PC-3 (cell line): ENCODE measurements at regions of chr2 and their contacts with region 1.

Region 1: DNA sequence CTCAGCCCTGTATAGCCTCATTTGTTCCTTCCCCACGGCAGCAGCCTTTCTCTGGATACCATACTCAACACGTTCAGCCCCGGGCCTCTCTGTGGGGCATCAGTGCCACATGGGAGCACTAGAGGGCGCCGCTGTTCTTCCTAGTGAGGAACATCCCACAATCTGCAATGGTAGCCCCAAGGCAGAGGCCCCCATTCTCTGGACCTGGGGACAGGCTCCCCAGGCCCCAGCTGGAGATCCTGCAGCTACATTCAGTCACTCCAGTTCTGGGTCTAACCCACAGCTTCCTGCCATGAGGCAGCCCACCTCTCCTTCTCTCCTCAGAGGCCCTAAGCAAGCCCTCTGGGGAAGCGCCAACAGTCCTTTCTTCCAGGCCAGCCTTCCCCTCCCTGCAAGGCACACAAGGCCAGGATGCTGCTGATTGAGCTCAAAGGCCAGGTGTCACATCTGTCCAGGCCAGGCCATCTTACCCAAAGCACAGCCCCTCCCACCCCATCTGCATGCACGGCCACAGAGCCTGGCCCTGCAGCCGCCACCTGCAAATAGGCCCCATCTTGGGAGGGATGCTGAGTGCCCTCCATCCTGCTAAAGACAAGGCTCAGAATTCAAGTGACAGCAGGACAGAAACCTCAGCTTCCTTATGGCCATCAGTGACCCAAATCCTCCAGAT is 14.3 kb upstream of the SFXN5 start:
- DNase-seq: peak; percentile 80
- ATAC-seq: peak; percentile 43
- H3K4me3 ChIP-seq: no peak overlapping the region
- H3K27ac ChIP-seq: no peak overlapping the region
- H3K4me1 ChIP-seq: peaks cover 16% of the 10 kb centered on the region
- H3K27me3 ChIP-seq: no peaks in the 10 kb centered on the region
- CTCF ChIP-seq: peak; percentile 95

Region 2: DNA sequence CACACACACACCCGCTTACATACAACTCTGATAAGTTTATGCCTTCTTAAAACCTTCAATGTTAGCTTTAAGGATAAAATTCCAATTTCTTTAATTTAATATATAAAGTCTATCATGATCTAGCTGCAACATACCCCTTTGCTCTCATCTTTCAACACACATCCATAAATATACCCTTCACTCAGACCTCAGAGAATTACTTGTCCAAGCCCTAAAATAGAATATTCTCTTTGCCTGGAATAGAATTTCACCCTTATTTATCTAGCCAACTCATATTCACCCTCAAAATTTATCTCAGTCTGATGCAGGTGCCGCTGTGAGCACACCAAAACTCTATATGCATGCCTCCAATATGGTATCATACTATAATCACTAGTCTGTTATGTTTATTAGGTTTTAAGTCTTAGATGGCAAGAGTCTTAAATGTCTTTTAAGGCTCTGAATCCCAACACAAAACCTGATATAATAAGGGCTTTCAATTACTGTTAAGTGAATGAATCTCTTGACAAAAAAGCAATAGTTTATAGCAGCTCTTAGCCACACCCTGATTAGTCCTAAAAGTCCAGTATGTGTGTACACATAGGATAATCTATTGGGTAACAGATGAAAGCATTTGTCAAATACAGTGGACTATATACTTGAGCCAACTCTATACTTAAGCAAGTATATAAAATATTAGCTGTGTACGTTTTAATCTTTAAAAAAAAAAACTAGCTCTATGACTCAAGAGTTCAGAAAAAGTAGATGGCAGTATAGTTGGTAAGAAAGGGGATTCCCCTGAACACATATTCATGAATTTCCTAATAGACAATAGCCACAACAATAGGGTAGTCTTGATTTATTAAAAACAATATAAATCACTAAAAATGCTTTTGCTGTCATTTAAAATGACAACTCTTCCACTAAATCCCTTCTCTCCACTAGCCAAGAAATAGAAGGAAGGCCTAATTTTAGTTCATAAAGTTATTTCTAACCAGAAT is 404.5 kb before region 1 on chr2:
- CTCF ChIA-PET with region 1: no interaction called
- POLR2A ChIA-PET with region 1: no interaction called
- intact Hi-C with region 1: no loop called
- DNase-seq: no peak
- ATAC-seq: no peak
- H3K4me3 ChIP-seq: no peak overlapping the region
- H3K27ac ChIP-seq: no peak overlapping the region
- H3K4me1 ChIP-seq: no peaks in the 10 kb centered on the region
- H3K27me3 ChIP-seq: no peaks in the 10 kb centered on the region
- CTCF ChIP-seq: no peak

Region 3: DNA sequence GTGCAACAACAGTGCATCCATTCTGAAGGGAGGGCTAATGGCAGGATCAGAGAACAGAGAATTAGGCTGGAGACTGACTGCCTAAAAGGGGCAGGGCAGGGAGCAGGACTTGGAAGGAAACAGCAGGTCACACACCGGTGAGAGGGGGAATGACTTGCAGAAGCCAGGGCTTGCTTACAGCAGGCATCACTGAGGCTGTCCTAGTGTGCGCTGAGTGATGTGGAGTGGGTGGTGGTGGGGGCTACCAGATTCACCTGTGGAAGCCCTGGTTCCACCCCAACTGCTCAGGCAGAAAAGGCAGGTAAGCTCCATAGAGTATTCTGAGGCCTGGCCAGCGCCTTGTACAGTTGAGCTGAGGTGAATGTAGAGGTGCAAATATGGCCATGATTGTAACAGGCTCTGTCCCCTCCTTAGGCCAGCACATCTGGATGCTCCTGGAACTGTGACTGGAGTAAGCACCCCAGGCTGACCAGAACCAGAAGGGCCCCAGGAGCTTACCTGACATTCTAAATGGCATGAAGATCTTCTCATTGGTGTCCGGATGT is 63.7 kb before region 1 on chr2:
- CTCF ChIA-PET with region 1: no interaction called
- POLR2A ChIA-PET with region 1: interaction called, 17 read pairs
- intact Hi-C with region 1: no loop called
- DNase-seq: no peak
- ATAC-seq: no peak
- H3K4me3 ChIP-seq: no peak overlapping the region
- H3K27ac ChIP-seq: no peak overlapping the region
- H3K4me1 ChIP-seq: no peaks in the 10 kb centered on the region; the same call in 1 of the 2 replicates
- H3K27me3 ChIP-seq: no peaks in the 10 kb centered on the region
- CTCF ChIP-seq: no peak

Region 4: DNA sequence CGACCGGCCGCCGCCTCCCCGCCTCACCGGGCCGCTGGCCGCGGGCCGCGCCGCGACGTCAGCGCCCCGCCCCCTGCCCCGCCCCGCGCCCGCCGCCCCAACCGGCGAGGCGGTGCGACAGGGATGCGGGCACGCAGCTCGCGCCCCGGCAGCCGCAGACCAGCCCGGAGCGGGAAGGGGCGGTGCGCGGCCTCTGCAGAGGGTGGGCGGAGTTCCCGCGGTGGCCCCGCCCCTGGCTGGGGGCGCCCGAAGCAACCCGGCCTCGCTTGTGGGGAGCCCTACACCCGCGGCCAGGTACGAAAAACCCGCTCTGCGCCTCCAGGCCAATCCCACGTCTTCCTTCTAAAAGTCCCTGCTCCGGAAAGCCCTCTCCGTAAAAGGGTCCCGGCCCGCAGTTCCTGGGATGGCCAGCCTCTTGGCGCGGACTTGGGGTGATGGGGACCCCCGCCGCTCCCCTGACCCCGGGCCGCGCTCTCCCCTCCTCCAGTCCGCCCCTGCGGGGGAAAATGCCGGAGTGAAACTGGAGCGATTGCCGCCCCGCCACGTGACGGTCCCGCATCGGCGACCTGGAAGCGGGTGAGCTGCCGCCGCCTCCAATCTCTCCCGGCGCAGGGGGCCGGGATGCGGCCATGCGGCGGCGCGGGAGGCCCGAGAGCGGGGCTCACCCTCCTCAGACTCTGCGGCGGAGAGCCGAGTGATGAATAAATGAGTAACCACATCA is 27.2 kb after region 1 on chr2 and contains the start of gene RAB11FIP5:
- CTCF ChIA-PET with region 1: no interaction called
- POLR2A ChIA-PET with region 1: no interaction called
- intact Hi-C with region 1: loop called (anchors 1 kb)
- DNase-seq: peak; percentile 84
- ATAC-seq: peak; percentile 66
- H3K4me3 ChIP-seq: peak within 1 kb of the TSS; percentile 87
- H3K27ac ChIP-seq: peak within 1 kb of the TSS; percentile 82
- H3K4me1 ChIP-seq: peaks cover 18% of the 10 kb centered on the region
- H3K27me3 ChIP-seq: no peaks in the 10 kb centered on the region
- CTCF ChIP-seq: no peak
- total RNA-seq, gene RAB11FIP5: 26.6 and 36.9 TPM in 2 replicates

Region 5: DNA sequence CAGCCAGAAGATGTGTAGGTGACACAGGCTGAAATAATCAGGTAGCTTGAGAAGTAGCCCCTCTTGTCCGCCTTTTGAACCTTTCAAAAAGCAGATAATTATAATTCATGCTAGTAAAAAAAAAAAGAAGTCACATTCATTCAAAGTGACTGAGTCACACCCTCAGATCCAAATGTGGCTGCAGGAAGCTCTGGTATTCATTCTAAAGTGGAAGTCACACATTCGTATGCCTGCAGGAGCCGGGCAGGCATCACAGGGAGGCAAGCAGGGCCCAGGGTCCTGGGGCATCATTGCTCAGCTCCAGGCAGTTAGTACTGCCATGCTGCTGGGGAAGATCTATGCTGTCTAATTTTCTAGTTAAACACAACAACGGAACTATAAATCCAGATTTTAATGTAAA is 48.6 kb after region 1 on chr2:
- CTCF ChIA-PET with region 1: interaction called, 12 read pairs
- POLR2A ChIA-PET with region 1: interaction called, 3 read pairs
- intact Hi-C with region 1: no loop called
- DNase-seq: no peak
- ATAC-seq: no peak
- H3K4me3 ChIP-seq: no peak overlapping the region
- H3K27ac ChIP-seq: no peak overlapping the region
- H3K4me1 ChIP-seq: no peaks in the 10 kb centered on the region
- H3K27me3 ChIP-seq: no peaks in the 10 kb centered on the region
- CTCF ChIP-seq: no peak

Region 6: DNA sequence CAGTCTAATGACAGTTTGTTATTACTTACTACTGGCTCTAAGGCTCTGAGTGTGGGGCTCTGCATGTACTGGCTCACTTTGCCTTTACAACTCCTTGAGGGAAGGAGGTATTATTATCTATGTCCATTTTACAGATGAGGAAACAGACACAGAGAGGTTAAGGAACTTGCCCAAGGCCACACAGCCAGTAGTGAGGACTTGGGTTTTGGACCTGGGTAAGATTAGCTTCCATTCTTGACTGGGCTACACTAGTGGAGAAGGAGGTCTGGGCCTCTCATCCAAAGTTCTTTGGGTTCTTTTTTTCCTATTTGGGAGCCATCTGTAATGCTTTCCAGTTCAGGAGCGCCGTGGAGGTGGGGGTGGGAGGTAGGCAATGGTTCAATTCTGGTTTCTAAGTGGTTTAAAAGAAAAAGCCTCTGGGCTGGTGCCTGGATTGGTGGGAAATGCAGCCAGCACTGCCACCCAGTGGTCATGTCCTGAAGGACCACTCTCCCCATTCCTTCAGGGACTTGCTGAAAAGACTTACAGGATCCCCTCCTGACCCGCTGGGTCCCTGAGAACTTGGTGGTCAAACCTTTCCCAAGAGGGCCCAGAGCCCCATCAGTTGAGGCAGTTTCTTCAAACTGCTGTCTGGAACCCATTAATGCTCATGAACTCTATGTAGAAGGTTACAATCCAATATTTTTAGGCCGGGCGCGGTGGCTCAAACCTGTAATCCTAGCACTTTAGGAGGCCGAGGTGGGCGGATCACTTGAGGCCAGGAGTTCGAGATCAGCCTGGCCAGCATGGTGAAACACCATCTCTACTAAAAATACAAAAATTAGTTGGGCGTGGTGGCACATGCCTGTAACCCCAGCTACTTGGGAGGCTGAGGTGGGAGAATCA is 77.9 kb after region 1 on chr2:
- CTCF ChIA-PET with region 1: interaction called, 6 read pairs
- POLR2A ChIA-PET with region 1: no interaction called
- intact Hi-C with region 1: loop called (anchors 1 kb)
- DNase-seq: peak; percentile 81
- ATAC-seq: peak; percentile 96
- H3K4me3 ChIP-seq: no peak overlapping the region
- H3K27ac ChIP-seq: no peak overlapping the region
- H3K4me1 ChIP-seq: no peaks in the 10 kb centered on the region
- H3K27me3 ChIP-seq: no peaks in the 10 kb centered on the region
- CTCF ChIP-seq: peak; percentile 85

Region 7: DNA sequence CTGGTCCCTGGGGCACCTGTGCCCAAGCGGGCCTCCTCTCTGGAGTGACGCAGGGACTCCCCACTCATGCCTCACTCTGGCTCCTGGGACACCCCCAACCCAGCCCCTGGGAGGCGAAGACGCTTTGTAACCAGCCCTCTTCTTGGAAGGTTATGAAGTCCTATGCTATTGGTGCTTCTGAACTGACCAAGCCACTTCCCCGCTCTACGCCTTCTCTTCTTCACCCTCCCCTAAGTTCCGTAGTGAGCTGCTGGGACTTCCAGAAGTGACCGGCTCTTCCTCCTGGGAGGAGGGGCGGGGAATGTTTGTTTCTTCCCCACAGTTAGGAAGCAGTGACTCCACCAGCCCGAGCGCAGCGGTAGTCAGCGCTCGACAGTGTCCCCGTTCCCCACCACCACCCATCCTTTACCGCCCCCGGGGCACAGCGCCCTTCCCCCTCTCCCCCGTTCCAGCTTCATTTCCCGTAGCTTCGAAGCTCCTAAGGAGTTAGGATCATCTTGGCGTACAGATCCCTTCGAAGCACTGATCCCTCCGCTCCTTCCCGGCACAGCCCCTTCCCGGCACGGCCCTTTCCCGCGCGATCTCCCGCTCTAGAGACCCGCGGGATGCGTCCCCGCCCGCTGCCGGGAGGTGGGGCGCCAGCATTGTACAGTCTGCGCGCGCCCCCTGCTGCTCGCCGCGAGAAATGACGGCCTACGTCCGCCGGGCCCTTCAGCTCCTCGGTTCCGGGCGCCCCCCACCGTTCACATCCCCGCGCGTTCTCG is 91.2 kb after region 1 on chr2:
- CTCF ChIA-PET with region 1: interaction called, 3 read pairs
- POLR2A ChIA-PET with region 1: no interaction called
- intact Hi-C with region 1: loop called (anchors 5 kb)
- DNase-seq: peak; percentile 85
- ATAC-seq: peak; percentile 82
- H3K4me3 ChIP-seq: peak overlapping the region; percentile 75
- H3K27ac ChIP-seq: no peak overlapping the region
- H3K4me1 ChIP-seq: peaks cover 22% of the 10 kb centered on the region
- H3K27me3 ChIP-seq: peaks cover 27% of the 10 kb centered on the region
- CTCF ChIP-seq: peak; percentile 98